ENCODE measurements at regions of chr1 and their contacts with region 1.

Region 1: GRCh38 chr1:50332941-50333594 is 90.2 kb downstream of the DMRTA2 start:
- DNase-seq: peak; percentile 49
- H3K4me3 Mint-ChIP-seq: peak overlapping the region; percentile 24
- H3K27ac Mint-ChIP-seq: no peak overlapping the region
- H3K4me1 Mint-ChIP-seq: no peaks in the 10 kb centered on the region
- H3K27me3 Mint-ChIP-seq: peaks cover 50% of the 10 kb centered on the region

Region 2: GRCh38 chr1:48916130-48917069 is 1416.7 kb before region 1 on chr1:
- CTCF ChIA-PET with region 1: no interaction called
- intact Hi-C with region 1: loop called (anchors 2 kb)
- DNase-seq: no peak
- H3K4me3 Mint-ChIP-seq: no peak overlapping the region
- H3K27ac Mint-ChIP-seq: no peak overlapping the region
- H3K4me1 Mint-ChIP-seq: no peaks in the 10 kb centered on the region
- H3K27me3 Mint-ChIP-seq: peaks cover 5% of the 10 kb centered on the region

Region 3: GRCh38 chr1:50208315-50208714 is 124.8 kb before region 1 on chr1:
- CTCF ChIA-PET with region 1: no interaction called
- intact Hi-C with region 1: no loop called
- DNase-seq: no peak
- H3K4me3 Mint-ChIP-seq: no peak overlapping the region
- H3K27ac Mint-ChIP-seq: no peak overlapping the region
- H3K4me1 Mint-ChIP-seq: no peaks in the 10 kb centered on the region
- H3K27me3 Mint-ChIP-seq: peaks cover 4% of the 10 kb centered on the region

Region 4: GRCh38 chr1:50343323-50343722 is 10.3 kb after region 1 on chr1:
- CTCF ChIA-PET with region 1: interaction called, 21 read pairs
- intact Hi-C with region 1: no loop called
- DNase-seq: no peak
- H3K4me3 Mint-ChIP-seq: no peak overlapping the region
- H3K27ac Mint-ChIP-seq: no peak overlapping the region
- H3K4me1 Mint-ChIP-seq: no peaks in the 10 kb centered on the region
- H3K27me3 Mint-ChIP-seq: peaks cover 14% of the 10 kb centered on the region

Measured in activated naive CD4-positive, alpha-beta T cell treated with anti-CD3 and anti-CD28 coated beads for 36 hours (primary cell).